T-cell (primary cell): ENCODE measurements at regions of chrX and their contacts with region 1.

Region 1: GRCh38 chrX:104122829-104123228 is 10.5 kb downstream of the ZCCHC18 start:
- DNase-seq: peak in 3 of 35 experiments; percentile 15 to 36 (median 29)
- ATAC-seq: peak; percentile 75 to 97 (median 93)
- H3K4me3 ChIP-seq: no peak overlapping the region
- H3K4me3 Mint-ChIP-seq: peak overlapping the region in 1 of 3 donors; percentile 53
- H3K27ac ChIP-seq: no peak overlapping the region
- H3K27ac Mint-ChIP-seq: peak overlapping the region; percentile 84 to 87
- H3K4me1 ChIP-seq: peaks cover 10 to 12% of the 10 kb centered on the region in 2 experiments
- H3K4me1 Mint-ChIP-seq: peaks cover 14 to 37% (median 16%) of the 10 kb centered on the region in 3 donors
- H3K27me3 ChIP-seq: no peaks in the 10 kb centered on the region
- H3K27me3 Mint-ChIP-seq: peaks cover 0 to 13% of the 10 kb centered on the region in 2 donors

Region 2: DNA sequence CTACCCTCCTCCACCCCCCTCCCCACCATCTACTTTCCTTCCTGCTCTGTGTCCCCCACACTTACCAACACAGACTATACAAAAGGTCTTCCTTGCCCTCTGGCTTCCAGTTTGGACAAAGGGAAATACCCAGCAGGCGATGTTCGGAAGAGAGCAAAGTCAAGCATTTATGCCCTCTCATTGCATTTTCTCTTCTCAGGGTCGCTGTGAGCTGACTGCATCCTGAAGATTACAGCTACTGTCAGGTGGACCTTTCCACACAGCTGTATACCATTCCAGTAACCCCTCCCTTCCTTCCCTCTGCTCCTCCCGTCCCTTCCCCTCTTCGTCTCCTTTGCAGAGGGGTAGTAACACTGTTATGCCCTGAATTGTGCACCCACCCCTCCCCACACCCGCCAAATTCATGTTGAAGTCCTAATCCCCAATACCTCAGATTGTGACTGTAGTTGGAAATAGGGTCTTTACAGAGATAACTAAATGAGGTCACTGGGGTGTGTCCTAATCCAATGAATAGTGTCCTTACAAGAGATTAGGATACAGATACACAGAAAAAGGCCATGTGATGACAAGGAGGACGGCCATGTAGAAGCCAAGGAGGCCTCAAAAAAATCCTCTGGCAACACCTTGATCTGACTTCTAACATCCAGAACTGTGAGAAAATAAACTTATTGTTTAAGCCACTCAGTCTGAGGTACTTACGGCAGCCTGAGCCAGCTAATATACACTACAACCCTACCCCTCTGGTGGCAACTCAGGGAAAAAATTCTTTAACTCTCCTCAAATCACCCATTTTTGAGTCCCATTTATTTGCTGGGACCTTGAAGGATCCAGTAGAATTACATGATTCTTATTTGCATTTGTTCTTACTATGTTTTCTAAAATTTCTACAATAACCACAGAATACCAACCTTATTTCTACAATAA is 448.0 kb before region 1 on chrX:
- CTCF ChIA-PET with region 1: no interaction called
- POLR2A ChIA-PET with region 1: interaction called in 1 of 2 experiments, 11 read pairs
- DNase-seq: no peak
- ATAC-seq: no peak
- H3K4me3 ChIP-seq: no peak overlapping the region
- H3K4me3 Mint-ChIP-seq: no peak overlapping the region
- H3K27ac ChIP-seq: no peak overlapping the region
- H3K27ac Mint-ChIP-seq: no peak overlapping the region
- H3K4me1 ChIP-seq: no peaks in the 10 kb centered on the region
- H3K4me1 Mint-ChIP-seq: peaks cover 0 to 15% (median 2%) of the 10 kb centered on the region in 3 donors
- H3K27me3 ChIP-seq: no peaks in the 10 kb centered on the region
- H3K27me3 Mint-ChIP-seq: peaks cover 0 to 14% of the 10 kb centered on the region in 2 donors